ENCODE measurements at regions of chr2 and their contacts with region 1.

Region 1: DNA sequence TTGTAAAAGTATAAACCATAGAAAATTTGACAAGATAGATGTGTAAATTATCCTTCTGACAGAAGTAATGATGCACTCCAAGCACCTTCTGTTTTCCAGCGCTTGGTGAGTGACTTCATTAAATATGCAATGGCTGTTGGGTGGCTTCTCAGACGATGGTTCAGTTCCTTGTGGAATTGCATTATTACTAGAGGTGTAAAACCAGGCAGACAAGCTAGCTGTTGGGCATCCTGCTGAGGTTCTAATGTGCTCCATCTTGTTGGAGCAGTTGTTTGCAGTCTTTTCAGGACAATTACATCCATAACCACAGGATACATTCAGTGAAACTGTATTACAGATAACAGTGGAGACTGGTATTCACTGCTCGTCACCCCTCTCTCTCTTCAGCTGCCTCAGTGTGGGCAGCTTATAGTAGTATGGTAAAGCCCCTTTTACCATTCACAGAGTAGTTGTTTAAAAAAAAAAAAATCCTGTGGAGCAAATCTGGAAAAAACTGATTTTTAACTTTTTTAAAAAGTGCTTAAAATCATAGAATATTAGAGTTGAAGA is 143.5 kb downstream of the AGPS start:
- DNase-seq: no peak
- H3K4me3 Mint-ChIP-seq: no peak overlapping the region
- H3K27ac Mint-ChIP-seq: no peak overlapping the region
- H3K4me1 Mint-ChIP-seq: no peaks in the 10 kb centered on the region
- H3K27me3 Mint-ChIP-seq: no peaks in the 10 kb centered on the region

Region 2: DNA sequence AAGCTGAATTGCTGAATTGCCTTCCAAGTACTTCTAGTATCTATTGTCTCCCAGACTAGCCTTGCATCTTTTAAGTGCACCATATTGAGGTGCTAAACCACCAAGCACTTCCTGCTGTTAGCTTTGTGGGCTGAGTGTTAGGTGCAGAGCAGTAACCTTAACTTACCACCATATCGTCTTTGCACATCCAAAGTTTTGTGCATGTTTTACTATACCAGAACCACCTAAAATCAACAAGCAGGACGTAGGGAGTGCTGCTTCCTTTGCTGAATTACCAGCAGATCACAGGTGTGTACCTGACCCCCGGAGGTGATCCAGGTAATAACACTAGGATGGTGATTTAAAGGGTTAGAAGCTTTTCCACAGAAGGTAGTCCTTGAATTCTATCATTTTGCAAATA is 683.4 kb before region 1 on chr2:
- CTCF ChIA-PET with region 1: no interaction called
- POLR2A ChIA-PET with region 1: no interaction called
- DNase-seq: peak; percentile 69
- H3K4me3 Mint-ChIP-seq: no peak overlapping the region
- H3K27ac Mint-ChIP-seq: peak overlapping the region; percentile 21
- H3K4me1 Mint-ChIP-seq: peaks cover 60% of the 10 kb centered on the region
- H3K27me3 Mint-ChIP-seq: no peaks in the 10 kb centered on the region

Region 3: DNA sequence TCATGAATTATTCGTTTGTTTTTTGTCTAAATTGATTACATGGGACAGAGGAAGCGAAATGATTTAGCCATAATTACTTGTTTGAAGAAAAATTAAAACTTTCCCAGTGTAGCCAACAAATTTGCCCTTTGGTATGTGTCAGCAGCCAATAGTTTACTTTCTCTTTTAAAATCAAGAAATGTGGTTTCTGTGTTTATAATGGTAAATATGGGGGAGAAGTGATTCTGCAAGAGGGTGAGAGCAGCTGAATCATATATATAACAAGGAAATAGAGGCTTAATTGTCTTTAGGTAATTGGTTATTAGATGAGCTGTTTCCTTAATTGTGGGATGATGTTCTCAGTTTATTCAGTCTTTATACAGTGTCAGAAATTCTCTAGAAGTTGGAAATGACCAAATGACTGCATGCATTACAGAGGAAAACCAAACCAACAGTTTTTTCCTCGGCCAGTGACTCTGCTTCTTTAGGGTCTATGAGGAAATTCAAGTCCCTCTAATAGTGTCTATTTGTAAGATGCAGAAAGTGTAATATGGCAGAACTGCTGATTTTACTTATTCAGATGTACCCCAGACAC is 10.6 kb before region 1 on chr2:
- CTCF ChIA-PET with region 1: interaction called, 15 read pairs
- POLR2A ChIA-PET with region 1: no interaction called
- DNase-seq: no peak
- H3K4me3 Mint-ChIP-seq: no peak overlapping the region
- H3K27ac Mint-ChIP-seq: peak overlapping the region; percentile 22
- H3K4me1 Mint-ChIP-seq: peaks cover 7% of the 10 kb centered on the region
- H3K27me3 Mint-ChIP-seq: no peaks in the 10 kb centered on the region